ENCODE measurements at regions of chr17 and their contacts with region 1.

Region 1: DNA sequence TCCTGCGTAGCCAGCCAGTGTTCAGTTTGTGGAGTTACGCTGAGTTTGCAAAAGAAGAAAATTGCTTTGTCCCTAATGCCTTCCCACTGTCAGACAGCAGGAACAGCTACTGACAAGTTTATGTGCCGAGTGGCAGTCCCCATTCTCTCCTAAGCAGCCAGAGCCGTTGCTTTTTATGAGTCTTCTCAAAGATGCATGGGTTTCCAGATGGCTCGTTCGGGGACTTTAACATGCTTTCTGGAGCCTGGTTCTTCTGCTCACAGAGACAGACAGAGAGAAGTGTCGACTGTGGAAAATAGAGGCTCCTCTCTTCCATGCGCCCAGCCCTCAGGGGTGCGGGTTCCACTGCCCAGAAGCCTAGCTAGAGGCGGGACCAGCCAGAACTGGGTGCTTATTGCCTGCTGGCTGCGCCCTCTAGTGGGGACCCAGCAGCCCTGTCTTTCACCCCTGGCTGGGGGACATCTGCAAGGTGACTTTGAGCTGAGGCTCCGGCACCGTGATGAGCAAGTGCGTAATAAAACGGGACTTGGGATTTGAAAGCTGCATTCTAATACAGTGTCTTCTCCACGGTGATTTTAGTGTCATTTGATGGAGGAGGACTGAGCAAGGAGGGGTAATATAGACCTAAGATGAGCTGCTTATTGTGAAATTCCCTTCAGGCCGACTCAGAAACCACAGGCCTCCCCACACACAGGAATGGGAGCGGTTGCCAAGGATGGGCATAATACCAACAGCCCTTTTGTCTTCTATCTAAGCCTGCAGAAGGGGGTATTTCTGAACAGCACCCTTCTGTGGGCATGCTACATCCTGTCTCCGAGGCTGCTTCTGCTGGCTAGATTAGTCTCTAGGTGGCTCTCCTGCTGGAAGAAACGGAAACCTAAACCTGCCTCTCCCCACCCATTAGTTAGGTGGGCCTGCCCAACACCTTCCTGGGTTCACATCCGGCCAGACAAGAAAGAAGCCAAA is 73.1 kb downstream of the CCDC182 start:
- DNase-seq: peak; percentile 87
- ATAC-seq: peak; percentile 96

Region 2: DNA sequence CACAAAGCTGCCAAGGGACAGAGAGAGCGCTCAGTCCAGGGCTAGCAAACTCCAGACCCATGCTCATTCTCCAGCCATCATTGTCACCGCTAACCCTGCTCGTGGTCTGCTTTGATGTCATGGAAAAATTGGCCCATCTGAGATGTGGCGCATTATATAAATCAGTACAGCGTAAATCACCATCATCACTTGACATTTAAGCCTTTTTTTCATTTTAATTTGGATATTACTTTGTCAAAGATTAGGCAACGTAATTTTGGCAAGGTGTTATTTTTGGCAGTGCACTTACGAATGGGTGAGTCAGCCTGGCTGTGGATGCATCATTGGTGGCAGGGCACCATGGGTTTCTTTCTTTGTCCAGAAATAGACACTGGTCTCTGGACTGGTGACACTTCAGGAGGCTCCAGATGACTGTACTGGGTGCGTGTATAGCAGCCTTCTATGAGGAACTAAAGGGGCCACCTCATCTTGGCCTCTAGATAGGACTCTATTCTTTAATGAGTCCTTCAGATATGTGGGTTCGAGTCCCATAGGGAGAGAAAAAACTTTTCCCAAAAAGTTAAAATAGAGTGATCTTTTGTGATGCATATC is 249.3 kb before region 1 on chr17:
- intact Hi-C with region 1: no loop called
- DNase-seq: no peak
- ATAC-seq: no peak

Region 3: GRCh38 chr17:57597531-57598453 is 74.2 kb before region 1 on chr17:
- intact Hi-C with region 1: loop called (anchors 2 kb)
- DNase-seq: peak; percentile 86
- ATAC-seq: peak; percentile 84

Region 4: GRCh38 chr17:57772774-57773173 is 100.8 kb after region 1 on chr17:
- intact Hi-C with region 1: no loop called
- DNase-seq: no peak
- ATAC-seq: no peak